ENCODE measurements at regions of chr19 and their contacts with region 1.

Region 1: GRCh38 chr19:8846819-8847218 is 14.6 kb downstream of the MBD3L1 start:
- DNase-seq: no peak
- H3K4me3 ChIP-seq: no peak overlapping the region
- H3K27ac ChIP-seq: no peak overlapping the region
- H3K27me3 ChIP-seq: no peaks in the 10 kb centered on the region
- CTCF ChIP-seq: no peak

Region 2: DNA sequence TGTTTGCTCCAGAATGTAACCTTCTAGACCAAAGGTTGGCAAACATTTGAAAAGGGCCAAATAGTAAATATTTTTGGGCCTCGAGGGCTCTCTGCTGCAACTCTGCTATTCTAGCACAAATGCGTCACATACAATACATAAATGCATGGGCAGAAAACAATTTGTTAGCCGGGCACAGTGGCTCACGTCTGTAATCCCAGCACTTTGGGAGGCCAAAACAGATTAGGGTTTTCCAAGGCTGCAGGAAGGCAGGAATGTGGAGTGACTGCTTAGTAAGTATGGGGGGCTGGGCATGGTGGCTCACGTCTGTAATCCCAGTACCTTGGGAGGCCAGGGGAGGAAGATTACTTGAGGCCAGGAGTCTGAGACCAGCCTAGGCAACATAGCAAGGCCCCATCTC is 1038.7 kb before region 1 on chr19:
- CTCF ChIA-PET with region 1: no interaction called
- POLR2A ChIA-PET with region 1: interaction called, 11 read pairs
- DNase-seq: no peak
- H3K4me3 ChIP-seq: no peak overlapping the region
- H3K27ac ChIP-seq: no peak overlapping the region
- H3K27me3 ChIP-seq: peaks cover 2% of the 10 kb centered on the region
- CTCF ChIP-seq: no peak

Region 3: GRCh38 chr19:8832132-8833021 is 14.4 kb before region 1 on chr19 and contains the starts of genes MBD3L1 and ZNF558:
- CTCF ChIA-PET with region 1: no interaction called
- POLR2A ChIA-PET with region 1: no interaction called
- DNase-seq: peak; percentile 94
- H3K4me3 ChIP-seq: peak within 1 kb of the TSS; percentile 77
- H3K27ac ChIP-seq: peak within 1 kb of the TSS; percentile 88
- H3K27me3 ChIP-seq: no peaks in the 10 kb centered on the region
- CTCF ChIP-seq: peak; percentile 17; the same call in 1 of the 2 replicates
- polyA plus RNA-seq, gene MBD3L1: not detected in 2 replicates
- polyA plus RNA-seq, gene ZNF558: 23.6 and 27.9 TPM in 2 replicates

Measured in AG04450 (cell line).